ENCODE measurements at regions of chr4 and their contacts with region 1.

Region 1: GRCh38 chr4:109589115-109589514 is 29.1 kb downstream of the MCUB start:
- DNase-seq: peak; percentile 5
- H3K4me3 ChIP-seq: no peak overlapping the region
- H3K27ac ChIP-seq: no peak overlapping the region
- H3K4me1 ChIP-seq: peaks cover 33% of the 10 kb centered on the region
- CTCF ChIP-seq: no peak

Region 2: GRCh38 chr4:109571494-109571893 is 17.6 kb before region 1 on chr4:
- CTCF ChIA-PET with region 1: no interaction called
- POLR2A ChIA-PET with region 1: interaction called, 11 read pairs
- intact Hi-C with region 1: no loop called
- DNase-seq: no peak
- H3K4me3 ChIP-seq: no peak overlapping the region
- H3K27ac ChIP-seq: no peak overlapping the region
- H3K4me1 ChIP-seq: peaks cover 10% of the 10 kb centered on the region
- CTCF ChIP-seq: no peak

Region 3: DNA sequence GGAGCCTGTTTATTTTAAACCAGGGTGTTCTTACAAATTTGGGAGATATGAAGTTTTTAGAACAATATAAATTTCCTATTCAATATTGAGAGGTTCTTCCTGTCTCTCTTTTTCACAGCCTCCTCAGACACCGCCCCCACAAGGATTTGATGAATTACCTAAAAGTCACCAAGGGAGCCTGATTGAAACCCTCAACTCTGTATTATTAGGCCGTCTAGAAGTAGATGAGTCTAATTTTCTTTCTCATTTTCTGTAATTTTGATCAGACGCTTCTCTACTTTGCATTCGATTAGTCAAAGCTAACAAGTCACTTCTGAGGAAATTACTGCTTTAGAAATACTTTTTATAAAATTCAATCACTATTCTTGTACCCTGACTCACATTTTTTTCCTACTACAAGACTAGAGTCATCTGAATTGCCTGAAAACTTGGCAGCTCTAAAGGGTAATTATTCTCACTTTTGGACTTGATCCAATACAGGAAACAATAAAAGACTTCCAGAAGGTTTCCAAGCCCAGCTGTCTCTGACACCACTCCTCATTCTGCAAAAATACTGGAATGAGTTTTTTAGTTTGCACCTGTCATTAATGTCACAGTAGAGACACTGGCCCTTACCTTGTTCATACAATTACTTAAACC is 498.1 kb after region 1 on chr4:
- CTCF ChIA-PET with region 1: no interaction called
- POLR2A ChIA-PET with region 1: no interaction called
- intact Hi-C with region 1: no loop called
- DNase-seq: no peak
- H3K4me3 ChIP-seq: no peak overlapping the region
- H3K27ac ChIP-seq: no peak overlapping the region
- H3K4me1 ChIP-seq: peaks cover 14% of the 10 kb centered on the region
- CTCF ChIP-seq: no peak